GM12878 (cell line): ENCODE measurements at regions of chrX and their contacts with region 1.

Region 1: DNA sequence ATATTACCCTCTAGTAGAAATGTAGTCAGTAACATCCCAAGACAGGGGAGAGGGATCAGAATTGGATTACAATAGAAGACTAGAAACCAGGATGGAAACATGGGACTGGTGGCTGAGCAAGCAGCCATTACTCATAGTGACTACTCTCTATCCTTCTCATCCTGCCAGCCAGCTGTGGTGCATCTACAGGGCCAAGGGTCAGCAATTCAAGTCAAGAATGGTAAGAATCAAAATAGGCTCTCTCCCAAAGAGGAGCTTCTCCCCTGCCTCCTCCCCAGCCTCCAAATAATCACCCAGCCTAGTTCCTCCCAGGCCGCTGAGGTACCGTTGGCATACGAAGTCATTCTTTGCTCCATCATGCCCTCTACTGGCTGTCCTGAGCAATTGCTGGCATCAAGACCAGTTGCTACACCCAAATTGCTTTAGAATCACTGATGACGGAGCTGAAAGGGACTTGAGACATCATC is 19.4 kb downstream of the AWAT2 start:
- DNase-seq: no peak
- ATAC-seq: peak; percentile 86
- H3K4me3 ChIP-seq: no peak overlapping the region
- H3K27ac ChIP-seq: no peak overlapping the region
- H3K4me1 ChIP-seq: no peaks in the 10 kb centered on the region
- H3K27me3 ChIP-seq: no peaks in the 10 kb centered on the region
- CTCF ChIP-seq: peak; percentile 70 to 89 (median 81)
- EP300 ChIP-seq: no peak
- POLR2A ChIP-seq: no peak
- RAD21 ChIP-seq: peak; percentile 67

Region 2: DNA sequence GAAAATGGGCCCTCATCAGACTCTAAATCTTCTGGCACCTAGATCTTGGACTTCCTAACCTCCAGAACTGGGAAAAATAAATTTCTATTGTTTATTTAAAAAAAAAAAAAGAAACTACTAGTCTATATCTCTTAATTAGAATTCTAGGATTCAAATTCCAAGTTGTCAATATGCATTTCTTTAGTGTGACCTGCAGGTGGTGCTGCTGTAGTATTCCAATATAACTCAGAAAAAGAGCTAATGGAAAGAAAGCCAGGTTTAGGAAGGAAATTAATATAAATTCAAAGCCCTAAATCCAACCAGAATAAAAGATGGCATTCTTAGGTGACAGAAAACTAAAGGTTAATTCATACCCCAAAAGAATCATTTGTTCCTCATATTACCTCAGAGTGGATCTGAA is 606.2 kb before region 1 on chrX:
- CTCF ChIA-PET with region 1: interaction called, 21 read pairs
- POLR2A ChIA-PET with region 1: no interaction called
- RAD21 ChIA-PET with region 1: interaction called, 6 read pairs
- SMC1A ChIA-PET with region 1: interaction called, 5 read pairs
- in situ Hi-C with region 1: no loop called
- intact Hi-C with region 1: no loop called
- DNase-seq: no peak
- ATAC-seq: no peak
- H3K4me3 ChIP-seq: no peak overlapping the region
- H3K27ac ChIP-seq: no peak overlapping the region
- H3K4me1 ChIP-seq: no peaks in the 10 kb centered on the region
- H3K27me3 ChIP-seq: no peaks in the 10 kb centered on the region
- CTCF ChIP-seq: peak; percentile 14 to 32 (median 28); a peak in 4 of 6 replicates
- EP300 ChIP-seq: no peak
- POLR2A ChIP-seq: no peak
- RAD21 ChIP-seq: peak; percentile 24; the same call in 1 of the 2 replicates

Region 3: GRCh38 chrX:69538321-69538876 is 491.9 kb before region 1 on chrX:
- CTCF ChIA-PET with region 1: interaction called, 5 read pairs
- POLR2A ChIA-PET with region 1: no interaction called
- RAD21 ChIA-PET with region 1: interaction called, 10 read pairs
- SMC1A ChIA-PET with region 1: interaction called, 8 read pairs
- in situ Hi-C with region 1: loop called (anchors 10 kb)
- intact Hi-C with region 1: loop called (anchors 1 kb)
- DNase-seq: no peak
- ATAC-seq: peak; percentile 97
- H3K4me3 ChIP-seq: no peak overlapping the region
- H3K27ac ChIP-seq: no peak overlapping the region
- H3K4me1 ChIP-seq: no peaks in the 10 kb centered on the region
- H3K27me3 ChIP-seq: no peaks in the 10 kb centered on the region
- CTCF ChIP-seq: peak; percentile 44 to 71 (median 70)
- EP300 ChIP-seq: no peak
- POLR2A ChIP-seq: no peak
- RAD21 ChIP-seq: peak; percentile 60

Region 4: GRCh38 chrX:69844636-69845035 is 185.7 kb before region 1 on chrX:
- CTCF ChIA-PET with region 1: no interaction called
- POLR2A ChIA-PET with region 1: no interaction called
- RAD21 ChIA-PET with region 1: no interaction called
- SMC1A ChIA-PET with region 1: no interaction called
- in situ Hi-C with region 1: no loop called
- intact Hi-C with region 1: no loop called
- DNase-seq: no peak
- ATAC-seq: no peak
- H3K4me3 ChIP-seq: no peak overlapping the region
- H3K27ac ChIP-seq: no peak overlapping the region
- H3K4me1 ChIP-seq: no peaks in the 10 kb centered on the region
- H3K27me3 ChIP-seq: no peaks in the 10 kb centered on the region
- CTCF ChIP-seq: no peak
- EP300 ChIP-seq: no peak
- POLR2A ChIP-seq: no peak
- RAD21 ChIP-seq: no peak

Region 5: DNA sequence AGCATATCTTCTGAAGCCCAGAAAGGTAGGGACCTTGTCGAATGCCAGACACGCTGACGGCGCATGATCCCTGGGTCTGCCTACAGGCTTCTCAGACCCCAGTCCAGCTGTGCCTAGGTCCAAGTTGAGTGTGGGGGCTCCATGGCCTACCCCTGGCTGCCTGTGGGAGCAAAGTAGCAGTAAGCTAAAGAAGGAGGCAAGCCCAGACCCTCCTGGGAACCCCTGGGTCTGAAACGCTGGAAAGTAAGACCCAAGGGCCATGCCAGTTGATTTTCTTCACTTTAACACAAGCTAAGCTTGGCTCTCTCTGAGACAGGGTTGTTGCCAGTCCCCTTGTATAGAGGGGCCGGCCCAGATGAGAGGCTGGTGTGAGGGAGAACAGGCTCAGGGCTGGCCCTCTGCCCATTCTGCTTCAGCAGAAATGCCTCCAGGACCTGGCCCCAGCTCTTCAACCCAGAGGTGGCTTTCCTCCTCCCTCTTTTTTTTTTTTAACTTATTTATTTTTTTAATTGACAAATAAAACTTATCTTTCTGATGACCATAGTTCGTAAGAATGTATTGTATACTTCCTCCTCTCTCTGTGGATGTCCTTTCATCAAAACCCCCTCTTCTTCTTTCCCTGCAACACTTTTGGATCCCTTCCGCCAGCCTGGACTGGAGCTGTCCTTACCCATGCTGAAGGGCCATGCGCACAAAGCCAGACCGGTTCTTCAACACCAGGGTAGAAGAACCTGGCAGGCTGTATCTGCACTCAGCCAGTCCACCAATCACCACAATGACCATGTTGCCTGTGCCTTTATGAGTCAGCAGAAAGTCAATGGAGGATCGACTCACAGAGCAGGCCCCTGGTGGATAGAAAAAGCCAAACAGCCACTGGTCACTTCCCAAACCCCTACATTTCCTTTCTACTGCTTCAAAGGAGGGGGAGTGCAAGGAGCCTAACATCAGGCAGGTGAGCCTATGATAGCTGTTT is 12.4 kb after region 1 on chrX:
- CTCF ChIA-PET with region 1: interaction called, 24 read pairs
- POLR2A ChIA-PET with region 1: no interaction called
- RAD21 ChIA-PET with region 1: no interaction called
- SMC1A ChIA-PET with region 1: interaction called, 4 read pairs
- in situ Hi-C with region 1: no loop called
- intact Hi-C with region 1: no loop called
- DNase-seq: no peak
- ATAC-seq: peak; percentile 21; the same call in 1 of the 3 replicates
- H3K4me3 ChIP-seq: no peak overlapping the region
- H3K27ac ChIP-seq: no peak overlapping the region
- H3K4me1 ChIP-seq: no peaks in the 10 kb centered on the region
- H3K27me3 ChIP-seq: no peaks in the 10 kb centered on the region; a peak in 2 of 4 replicates
- CTCF ChIP-seq: no peak
- EP300 ChIP-seq: no peak
- POLR2A ChIP-seq: no peak
- RAD21 ChIP-seq: no peak

Region 6: DNA sequence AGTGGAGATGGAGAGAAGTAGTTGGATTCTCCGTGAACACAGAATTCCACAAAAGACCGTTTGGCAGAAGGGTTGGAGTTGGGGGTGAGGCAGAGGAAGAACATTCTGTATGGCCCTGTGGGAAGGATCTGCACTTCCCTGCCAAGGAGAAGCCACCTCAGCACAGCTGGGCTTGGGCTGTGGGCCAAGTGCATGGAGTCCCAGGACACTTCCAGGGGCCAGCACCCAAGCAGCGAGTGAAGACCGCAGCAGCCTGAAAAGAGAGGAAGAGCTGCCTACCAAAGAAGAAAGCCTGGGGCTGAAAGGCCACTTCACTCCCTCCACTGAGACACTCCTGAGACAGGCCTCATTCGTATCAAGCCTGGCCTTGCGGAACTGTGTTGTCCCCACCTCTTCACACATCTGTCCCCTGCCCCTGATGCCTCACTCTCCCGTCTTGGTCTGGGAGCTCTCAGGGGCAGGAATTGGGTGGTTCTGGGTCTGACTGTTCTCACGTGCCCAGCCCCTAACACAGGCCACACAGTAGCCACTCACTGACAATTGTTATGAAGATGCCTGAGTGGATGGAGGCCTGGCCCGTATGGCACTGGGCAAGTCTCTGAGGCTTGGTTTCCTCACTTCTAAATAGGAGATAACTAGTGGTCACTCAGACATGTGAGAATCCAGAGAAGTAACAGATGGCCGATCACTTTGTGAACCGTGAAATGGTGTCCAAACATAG is 22.7 kb after region 1 on chrX:
- CTCF ChIA-PET with region 1: no interaction called
- POLR2A ChIA-PET with region 1: no interaction called
- RAD21 ChIA-PET with region 1: no interaction called
- SMC1A ChIA-PET with region 1: no interaction called
- in situ Hi-C with region 1: no loop called
- intact Hi-C with region 1: no loop called
- DNase-seq: no peak
- ATAC-seq: no peak
- H3K4me3 ChIP-seq: no peak overlapping the region
- H3K27ac ChIP-seq: no peak overlapping the region
- H3K4me1 ChIP-seq: no peaks in the 10 kb centered on the region
- H3K27me3 ChIP-seq: no peaks in the 10 kb centered on the region
- CTCF ChIP-seq: no peak
- EP300 ChIP-seq: no peak
- POLR2A ChIP-seq: no peak
- RAD21 ChIP-seq: no peak

Region 7: DNA sequence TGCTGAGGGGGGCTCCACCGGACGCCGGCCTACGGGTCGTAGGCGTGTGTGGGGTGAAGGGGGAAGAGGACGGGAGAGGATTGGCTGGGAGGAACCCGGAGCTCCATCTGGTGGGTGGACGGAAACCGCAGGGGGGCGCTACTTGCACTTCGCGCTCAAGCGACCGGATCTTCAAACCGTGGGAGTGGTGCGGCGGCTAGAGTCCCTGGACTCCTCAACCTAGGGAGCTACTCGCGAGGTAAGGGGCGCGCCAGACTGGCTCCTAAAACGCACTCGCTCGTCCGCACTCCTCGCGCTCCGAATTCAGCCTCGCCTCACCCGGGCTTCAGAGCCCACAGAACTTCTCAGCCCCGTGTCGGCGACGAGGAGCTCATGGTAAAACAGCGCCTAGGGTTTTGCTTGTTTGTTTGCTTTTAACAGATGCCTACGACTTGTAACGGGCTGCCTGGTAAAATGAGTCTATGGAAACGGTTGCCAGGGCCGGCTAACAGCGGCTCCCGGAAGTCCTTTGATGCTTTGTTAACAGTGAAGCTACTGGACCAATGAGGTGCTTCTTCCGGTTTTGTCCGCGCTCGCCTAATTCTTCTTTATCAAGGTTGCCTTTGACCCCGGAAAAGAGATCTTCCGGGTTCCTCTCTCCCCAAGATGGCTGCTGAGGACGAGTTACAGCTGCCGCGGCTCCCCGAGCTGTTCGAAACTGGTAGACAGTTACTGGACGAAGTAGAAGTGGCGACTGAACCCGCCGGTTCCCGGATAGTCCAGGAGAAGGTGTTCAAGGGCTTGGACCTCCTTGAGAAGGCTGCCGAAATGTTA is 103.2 kb after region 1 on chrX and contains the start of gene IGBP1:
- CTCF ChIA-PET with region 1: interaction called, 14 read pairs
- POLR2A ChIA-PET with region 1: no interaction called
- RAD21 ChIA-PET with region 1: no interaction called
- SMC1A ChIA-PET with region 1: no interaction called
- in situ Hi-C with region 1: loop called (anchors 25 kb)
- intact Hi-C with region 1: no loop called
- DNase-seq: peak; percentile 49
- ATAC-seq: peak; percentile 91
- H3K4me3 ChIP-seq: peak within 1 kb of the TSS; percentile 76
- H3K27ac ChIP-seq: peak within 1 kb of the TSS; percentile 83
- H3K4me1 ChIP-seq: no peaks in the 10 kb centered on the region
- H3K27me3 ChIP-seq: no peaks in the 10 kb centered on the region
- CTCF ChIP-seq: peak; percentile 35 to 53 (median 44); a peak in 5 of 6 replicates
- EP300 ChIP-seq: no peak
- POLR2A ChIP-seq: peak; percentile 82
- RAD21 ChIP-seq: no peak
- polyA plus RNA-seq, gene IGBP1: 75.8 to 99.3 TPM

Region 8: DNA sequence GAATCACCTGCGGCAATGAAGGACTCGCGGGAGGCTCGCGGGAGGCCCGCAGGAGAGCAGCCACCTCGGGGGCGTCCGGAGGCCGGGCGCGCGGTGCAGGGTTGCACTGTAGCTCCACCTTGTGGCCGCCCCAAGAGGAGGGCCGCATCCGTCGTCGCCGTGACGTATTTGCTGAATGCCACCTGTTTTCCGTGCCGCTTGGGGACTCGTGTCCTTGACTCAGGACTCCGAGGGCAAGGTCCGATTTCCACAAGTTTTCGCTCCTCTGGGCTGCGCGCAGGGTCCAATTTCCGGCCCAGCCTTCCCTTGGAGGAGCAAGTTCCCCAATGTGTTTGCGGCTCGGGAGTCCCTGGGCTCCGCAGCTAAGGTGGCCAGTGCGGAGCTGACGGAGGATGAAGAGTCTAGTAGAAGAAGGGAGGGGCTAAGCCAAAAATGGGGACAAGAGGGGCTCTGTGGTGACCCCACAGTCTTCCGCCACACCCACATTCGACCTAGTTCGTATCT is 403.6 kb after region 1 on chrX:
- CTCF ChIA-PET with region 1: interaction called, 3 read pairs
- POLR2A ChIA-PET with region 1: no interaction called
- RAD21 ChIA-PET with region 1: interaction called, 3 read pairs
- SMC1A ChIA-PET with region 1: no interaction called
- in situ Hi-C with region 1: loop called (anchors 25 kb)
- intact Hi-C with region 1: loop called (anchors 5 kb)
- DNase-seq: no peak
- ATAC-seq: peak; percentile 81
- H3K4me3 ChIP-seq: peak overlapping the region; percentile 75
- H3K27ac ChIP-seq: peak overlapping the region; percentile 50; the same call in 1 of the 2 replicates
- H3K4me1 ChIP-seq: peaks cover 10% of the 10 kb centered on the region
- H3K27me3 ChIP-seq: no peaks in the 10 kb centered on the region
- CTCF ChIP-seq: peak; percentile 63 to 71 (median 69)
- EP300 ChIP-seq: no peak
- POLR2A ChIP-seq: 0 out of 2 replicates have a peak, but pooled peaks have one; percentile 43
- RAD21 ChIP-seq: peak; percentile 48